ENCODE measurements at regions of chr20 and their contacts with region 1.

Region 1: GRCh38 chr20:49610701-49611538 is 43.0 kb upstream of the PTGIS start:
- DNase-seq: peak; percentile 91
- ATAC-seq: peak; percentile 69

Region 2: GRCh38 chr20:49508435-49509199 is 102.3 kb before region 1 on chr20:
- intact Hi-C with region 1: no loop called
- DNase-seq: no peak
- ATAC-seq: no peak

Region 3: GRCh38 chr20:49541733-49542513 is 69.0 kb before region 1 on chr20:
- intact Hi-C with region 1: loop called (anchors 1 kb)
- DNase-seq: peak; percentile 80
- ATAC-seq: peak; percentile 73

Region 4: DNA sequence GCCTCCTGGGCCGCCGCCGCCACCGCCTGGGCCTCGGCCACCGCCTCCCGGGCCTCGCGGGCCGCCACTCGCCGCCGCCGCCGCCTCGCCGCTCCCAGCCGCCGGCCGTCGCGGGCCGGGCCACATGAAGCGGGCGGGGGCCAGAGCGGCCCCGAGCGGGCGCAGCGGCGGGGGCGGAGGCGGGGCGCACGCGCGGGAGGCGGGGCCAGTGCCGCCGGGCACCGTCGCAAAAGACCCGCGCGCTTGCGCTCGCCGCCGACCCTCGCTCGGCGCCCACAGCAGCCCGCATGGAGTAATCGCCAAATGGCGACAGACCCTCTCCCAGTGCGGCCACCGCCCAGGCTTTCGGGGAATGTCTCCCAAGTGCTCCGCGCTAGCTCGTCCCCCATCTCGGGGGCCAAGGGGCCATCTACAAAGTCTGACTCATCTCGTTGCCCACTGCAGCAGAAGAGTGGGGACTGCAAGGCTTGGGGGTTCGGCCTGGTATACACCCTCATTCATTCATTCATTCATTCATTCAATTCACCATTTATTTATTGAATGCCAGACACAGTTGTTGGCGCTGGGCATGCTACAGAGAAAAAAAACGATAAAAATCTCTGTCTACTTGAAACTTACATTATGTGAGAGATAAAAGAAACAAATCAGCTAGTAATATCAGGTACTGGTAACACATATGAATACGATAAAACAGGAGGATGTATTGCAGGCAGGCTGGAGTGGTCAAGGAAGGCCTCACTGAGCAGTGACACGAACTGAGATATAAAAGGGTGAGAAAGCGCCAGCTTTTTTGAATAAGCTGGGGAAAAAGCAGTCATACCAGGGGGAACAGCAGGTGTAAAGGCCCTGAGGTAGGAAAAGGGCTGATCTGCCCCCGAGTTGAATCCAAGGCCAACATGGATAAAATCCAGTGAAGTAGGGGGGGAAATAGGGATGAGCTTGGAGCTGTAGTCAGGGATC is 103.1 kb after region 1 on chr20 and contains the start of gene B4GALT5:
- intact Hi-C with region 1: loop called (anchors 5 kb)
- DNase-seq: peak; percentile 83
- ATAC-seq: peak; percentile 87
- total RNA-seq, gene B4GALT5: 44.0 TPM

Region 5: GRCh38 chr20:49768204-49769047 is 157.5 kb after region 1 on chr20:
- intact Hi-C with region 1: loop called (anchors 5 kb)
- DNase-seq: no peak
- ATAC-seq: peak; percentile 52

Region 6: GRCh38 chr20:49846206-49846807 is 235.4 kb after region 1 on chr20:
- intact Hi-C with region 1: loop called (anchors 1 kb)
- DNase-seq: no peak
- ATAC-seq: no peak

Measured in Right ventricle myocardium inferior (tissue), 1 donor.